Activated T-helper 1 cell treated with anti-CD3 and anti-CD28 coated beads, Interleukin-12 subunit alpha, Interleukin-12 subunit beta, Interleukin-2, Interleukin-4 antibody, amounts not matched to agents 30 ng/mL and 10 ng/mL and 1 ng/mL, durations not matched to agents 14 hours and 24 hours and 36 hours (primary cell): ENCODE measurements at regions of chr5 and their contacts with region 1.

Region 1: GRCh38 chr5:77972469-77973252 is 196.5 kb upstream of the TBCA start:
- DNase-seq: no peak
- H3K4me3 Mint-ChIP-seq: peak overlapping the region; percentile 45
- H3K27ac Mint-ChIP-seq: no peak overlapping the region
- H3K4me1 Mint-ChIP-seq: no peaks in the 10 kb centered on the region
- H3K27me3 Mint-ChIP-seq: peaks cover 62% of the 10 kb centered on the region

Region 2: GRCh38 chr5:76082772-76083554 is 1889.7 kb before region 1 on chr5 and contains the start of gene SV2C:
- intact Hi-C with region 1: loop called (anchors 10 kb)
- DNase-seq: no peak
- H3K4me3 Mint-ChIP-seq: peak within 1 kb of the TSS; percentile 79
- H3K27ac Mint-ChIP-seq: peak within 1 kb of the TSS; percentile 26
- H3K4me1 Mint-ChIP-seq: peaks cover 14% of the 10 kb centered on the region
- H3K27me3 Mint-ChIP-seq: peaks cover 73% of the 10 kb centered on the region
- total RNA-seq, gene SV2C: 0.05 TPM in 1 of 2 replicates, not detected in the other

Region 3: GRCh38 chr5:77630258-77631089 is 342.2 kb before region 1 on chr5:
- intact Hi-C with region 1: loop called (anchors 5 kb)
- DNase-seq: peak; percentile 20
- H3K4me3 Mint-ChIP-seq: peak overlapping the region; percentile 72
- H3K27ac Mint-ChIP-seq: peak overlapping the region; percentile 72
- H3K4me1 Mint-ChIP-seq: peaks cover 28% of the 10 kb centered on the region
- H3K27me3 Mint-ChIP-seq: peaks cover 75% of the 10 kb centered on the region

Region 4: GRCh38 chr5:77679791-77680190 is 292.9 kb before region 1 on chr5:
- intact Hi-C with region 1: no loop called
- DNase-seq: no peak
- H3K4me3 Mint-ChIP-seq: no peak overlapping the region
- H3K27ac Mint-ChIP-seq: no peak overlapping the region
- H3K4me1 Mint-ChIP-seq: no peaks in the 10 kb centered on the region
- H3K27me3 Mint-ChIP-seq: peaks cover 8% of the 10 kb centered on the region

Region 5: GRCh38 chr5:77844623-77845323 is 127.9 kb before region 1 on chr5:
- intact Hi-C with region 1: loop called (anchors 2 kb)
- DNase-seq: no peak
- H3K4me3 Mint-ChIP-seq: peak overlapping the region; percentile 53
- H3K27ac Mint-ChIP-seq: no peak overlapping the region
- H3K4me1 Mint-ChIP-seq: peaks cover 9% of the 10 kb centered on the region
- H3K27me3 Mint-ChIP-seq: peaks cover 72% of the 10 kb centered on the region

Region 6: GRCh38 chr5:77906806-77907205 is 65.9 kb before region 1 on chr5:
- intact Hi-C with region 1: no loop called
- DNase-seq: no peak
- H3K4me3 Mint-ChIP-seq: no peak overlapping the region
- H3K27ac Mint-ChIP-seq: no peak overlapping the region
- H3K4me1 Mint-ChIP-seq: no peaks in the 10 kb centered on the region
- H3K27me3 Mint-ChIP-seq: peaks cover 7% of the 10 kb centered on the region

Region 7: DNA sequence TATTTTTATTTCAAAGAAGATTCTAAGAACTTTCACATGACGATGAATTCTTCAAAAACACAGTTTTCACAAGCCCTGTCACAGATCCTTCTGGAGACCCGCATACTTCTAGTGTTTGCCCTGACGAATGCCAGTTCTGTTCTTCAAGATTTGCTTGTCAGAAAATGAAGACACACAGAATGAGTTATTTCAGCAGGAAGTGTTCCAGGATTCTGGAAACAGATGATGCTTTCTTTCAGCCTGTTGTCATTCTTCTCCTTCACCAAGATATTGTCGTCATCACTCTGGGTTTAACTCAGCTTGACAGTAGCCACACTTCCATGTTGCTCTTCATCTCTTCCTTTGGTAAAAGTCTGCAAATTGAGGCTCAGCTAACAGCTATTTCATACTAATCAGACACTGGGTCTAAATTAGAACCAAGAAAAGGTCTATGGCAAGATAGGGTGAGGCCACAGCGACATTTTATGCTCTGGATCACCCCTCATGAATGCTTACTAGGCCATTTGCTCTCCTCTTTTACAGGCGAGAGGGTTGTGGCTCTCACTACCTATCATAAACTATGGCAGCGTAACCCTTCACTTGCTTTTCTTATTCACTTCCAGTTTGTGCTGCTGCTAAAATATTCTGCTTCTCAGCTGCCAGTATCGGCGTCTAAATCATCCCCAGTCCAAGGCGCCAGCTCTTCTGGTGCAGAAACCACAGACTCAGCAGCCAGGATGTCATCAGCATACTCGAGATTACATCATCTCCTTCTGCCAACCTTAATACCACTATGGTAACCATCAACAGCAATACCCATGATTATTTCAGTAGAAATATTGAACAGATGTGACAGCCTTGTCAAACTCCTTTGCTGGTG is 36.9 kb before region 1 on chr5:
- intact Hi-C with region 1: no loop called
- DNase-seq: peak; percentile 11
- H3K4me3 Mint-ChIP-seq: no peak overlapping the region
- H3K27ac Mint-ChIP-seq: peak overlapping the region; percentile 19
- H3K4me1 Mint-ChIP-seq: peaks cover 15% of the 10 kb centered on the region
- H3K27me3 Mint-ChIP-seq: peaks cover 8% of the 10 kb centered on the region